Breast epithelium (tissue), 4 donors: ENCODE measurements at regions of chr14 and their contacts with region 1.

Region 1: GRCh38 chr14:77161011-77161410 is 19.4 kb upstream of the ZDHHC22 start:
- DNase-seq: no peak
- H3K4me3 ChIP-seq: no peak overlapping the region
- H3K27ac ChIP-seq: no peak overlapping the region
- H3K4me1 ChIP-seq: no peaks in the 10 kb centered on the region
- H3K27me3 ChIP-seq: no peaks in the 10 kb centered on the region
- CTCF ChIP-seq: no peak
- POLR2A ChIP-seq: no peak

Region 2: GRCh38 chr14:76086636-76087035 is 1074.4 kb before region 1 on chr14:
- intact Hi-C with region 1: loop called (anchors 5 kb)
- DNase-seq: no peak
- H3K4me3 ChIP-seq: no peak overlapping the region
- H3K27ac ChIP-seq: no peak overlapping the region
- H3K4me1 ChIP-seq: no peaks in the 10 kb centered on the region
- H3K27me3 ChIP-seq: no peaks in the 10 kb centered on the region
- CTCF ChIP-seq: no peak
- POLR2A ChIP-seq: no peak

Region 3: DNA sequence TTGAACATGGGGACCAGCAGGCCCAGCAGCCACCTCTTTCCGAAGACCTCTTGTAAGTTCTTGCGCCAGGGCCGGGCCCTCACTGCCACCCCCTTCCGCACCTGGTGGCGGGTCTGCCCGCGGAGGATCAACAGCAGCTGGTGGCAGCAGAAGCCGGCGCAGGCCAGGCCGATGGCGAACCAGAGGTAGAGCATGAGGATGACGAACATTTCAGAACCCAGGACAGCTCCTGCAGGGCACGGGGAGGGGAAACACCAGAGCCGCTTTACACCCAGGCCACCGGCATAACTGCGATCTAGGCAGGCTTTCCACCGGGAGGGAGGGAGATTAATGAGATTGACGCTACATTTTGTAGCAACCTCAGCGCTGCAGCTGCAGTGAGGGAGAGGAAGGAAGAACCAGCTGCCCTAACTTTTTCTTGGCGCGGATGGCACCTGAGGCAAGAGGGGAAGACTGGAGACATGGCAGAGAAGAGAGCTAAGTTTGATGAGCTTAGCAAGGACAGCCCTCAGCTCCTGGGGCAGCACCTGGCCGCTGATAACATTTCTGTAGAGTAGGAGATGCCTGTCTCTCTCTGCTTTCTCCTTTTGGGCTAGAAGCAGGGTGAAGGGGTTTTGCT is 27.2 kb before region 1 on chr14:
- intact Hi-C with region 1: no loop called
- DNase-seq: peak in 1 of 2 donors; percentile 65
- H3K4me3 ChIP-seq: no peak overlapping the region
- H3K27ac ChIP-seq: no peak overlapping the region
- H3K4me1 ChIP-seq: no peaks in the 10 kb centered on the region
- H3K27me3 ChIP-seq: peaks cover 0 to 49% of the 10 kb centered on the region in 2 donors
- CTCF ChIP-seq: no peak
- POLR2A ChIP-seq: no peak